ENCODE measurements at regions of chr6 and their contacts with region 1.

Region 1: DNA sequence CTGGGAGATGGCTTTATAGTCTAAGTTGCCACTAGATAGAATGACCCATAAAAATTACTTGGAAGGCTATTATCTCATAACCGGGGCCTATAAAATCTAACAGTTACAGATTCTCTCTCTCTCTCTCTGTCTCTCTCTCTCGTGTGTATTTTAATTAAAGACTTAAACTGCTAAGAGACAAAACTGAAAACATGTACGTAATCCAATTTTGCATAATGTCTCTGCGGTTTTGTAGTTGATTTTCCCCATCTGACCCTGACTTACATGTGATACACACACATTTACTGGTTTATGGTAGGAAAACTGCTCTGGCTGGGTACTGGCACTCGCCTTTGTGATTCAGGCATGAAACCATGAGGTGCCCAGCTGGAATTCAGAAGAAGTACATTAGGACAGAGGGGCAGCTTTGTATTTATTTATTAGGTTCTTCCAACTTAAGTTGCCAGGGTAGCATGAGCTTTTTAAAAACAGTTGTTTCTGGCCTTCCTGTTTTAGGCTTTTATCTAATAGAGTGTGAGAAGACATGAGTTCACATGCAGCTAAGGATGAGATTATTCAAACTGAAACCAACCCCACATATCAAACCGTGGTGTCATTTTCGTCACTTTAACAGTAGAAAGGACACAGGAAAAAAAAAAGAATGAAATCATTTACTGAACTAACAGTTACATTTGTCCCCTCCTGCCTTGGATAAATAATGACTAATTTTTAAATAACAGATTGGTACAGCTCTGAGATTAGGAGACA is 182.5 kb downstream of the GMPR start:
- DNase-seq: peak in 6 of 9 experiments; percentile 15 to 89 (median 43)
- ATAC-seq: peak; percentile 77
- H3K4me3 ChIP-seq: peak overlapping the region in 1 of 2 experiments; percentile 3
- H3K4me3 Mint-ChIP-seq: peak overlapping the region; percentile 78
- H3K27ac ChIP-seq: peak overlapping the region; percentile 62 to 95
- H3K27ac Mint-ChIP-seq: peak overlapping the region; percentile 98
- H3K4me1 ChIP-seq: peaks cover 27% of the 10 kb centered on the region
- H3K4me1 Mint-ChIP-seq: peaks cover 42% of the 10 kb centered on the region
- H3K27me3 ChIP-seq: no peaks in the 10 kb centered on the region
- H3K27me3 Mint-ChIP-seq: no peaks in the 10 kb centered on the region
- CTCF ChIP-seq: no peak

Region 2: GRCh38 chr6:16124198-16125180 is 296.4 kb before region 1 on chr6:
- CTCF ChIA-PET with region 1: no interaction called
- POLR2A ChIA-PET with region 1: no interaction called
- intact Hi-C with region 1: no loop called
- DNase-seq: no peak
- ATAC-seq: no peak
- H3K4me3 ChIP-seq: no peak overlapping the region
- H3K4me3 Mint-ChIP-seq: no peak overlapping the region
- H3K27ac ChIP-seq: no peak overlapping the region
- H3K27ac Mint-ChIP-seq: no peak overlapping the region
- H3K4me1 ChIP-seq: no peaks in the 10 kb centered on the region
- H3K4me1 Mint-ChIP-seq: peaks cover 7% of the 10 kb centered on the region
- H3K27me3 ChIP-seq: peaks cover 0 to 2% of the 10 kb centered on the region in 2 experiments
- H3K27me3 Mint-ChIP-seq: peaks cover 2% of the 10 kb centered on the region
- CTCF ChIP-seq: no peak

Region 3: DNA sequence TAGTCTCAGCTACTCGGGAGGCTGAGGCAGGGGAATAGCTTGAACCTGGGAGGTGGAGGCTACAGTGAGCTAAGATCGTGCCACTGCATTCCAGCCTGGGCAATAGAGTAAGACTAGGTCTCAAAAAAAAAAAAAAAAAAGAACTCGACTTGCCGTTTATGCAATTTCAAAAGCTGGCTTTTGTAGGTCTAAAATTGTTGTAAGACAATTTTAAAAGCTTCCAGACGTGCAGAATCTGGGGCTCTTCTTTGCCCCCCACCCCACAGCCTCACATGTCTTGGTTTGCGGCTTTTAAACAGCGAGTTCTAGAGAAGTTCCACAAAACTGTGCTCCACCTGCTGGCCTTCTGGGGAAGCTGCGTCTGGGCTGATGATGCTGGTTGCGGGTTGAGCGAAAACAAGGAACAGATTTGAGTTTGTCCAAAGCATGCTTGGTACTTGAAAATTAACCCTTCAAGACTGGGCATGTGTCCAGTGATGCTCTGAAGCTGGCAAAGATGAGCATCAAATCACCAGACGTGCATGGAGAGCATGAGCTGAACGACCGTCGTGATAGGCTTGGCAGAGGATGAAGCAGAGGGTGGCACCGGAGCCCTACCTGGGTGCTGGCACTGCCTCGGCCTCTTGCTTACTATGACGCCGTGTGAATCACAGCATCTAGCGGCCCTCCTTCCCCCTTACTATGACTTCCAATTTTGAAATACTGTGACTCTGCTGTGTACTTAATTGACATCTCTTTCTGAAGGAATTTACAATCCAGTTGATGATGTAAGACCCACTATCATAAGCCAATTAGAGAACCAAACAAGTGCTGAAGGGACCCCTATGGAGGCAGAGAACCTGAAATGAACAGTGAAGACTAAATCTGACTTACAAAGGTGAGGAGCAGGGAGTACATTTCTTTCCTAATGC is 11.1 kb before region 1 on chr6:
- CTCF ChIA-PET with region 1: interaction called, 9 read pairs
- POLR2A ChIA-PET with region 1: interaction called, 12 read pairs
- intact Hi-C with region 1: no loop called
- DNase-seq: peak; percentile 8 to 76 (median 60)
- ATAC-seq: peak; percentile 67
- H3K4me3 ChIP-seq: no peak overlapping the region
- H3K4me3 Mint-ChIP-seq: no peak overlapping the region
- H3K27ac ChIP-seq: no peak overlapping the region
- H3K27ac Mint-ChIP-seq: peak overlapping the region; percentile 7
- H3K4me1 ChIP-seq: no peaks in the 10 kb centered on the region
- H3K4me1 Mint-ChIP-seq: peaks cover 26% of the 10 kb centered on the region
- H3K27me3 ChIP-seq: no peaks in the 10 kb centered on the region
- H3K27me3 Mint-ChIP-seq: no peaks in the 10 kb centered on the region
- CTCF ChIP-seq: peak; percentile 66

Region 4: GRCh38 chr6:16481697-16482399 is 61.0 kb after region 1 on chr6:
- CTCF ChIA-PET with region 1: no interaction called
- POLR2A ChIA-PET with region 1: no interaction called
- intact Hi-C with region 1: loop called (anchors 5 kb)
- DNase-seq: peak; percentile 30 to 95 (median 61)
- ATAC-seq: peak; percentile 81
- H3K4me3 ChIP-seq: no peak overlapping the region
- H3K4me3 Mint-ChIP-seq: peak overlapping the region; percentile 52
- H3K27ac ChIP-seq: peak overlapping the region; percentile 28 to 83
- H3K27ac Mint-ChIP-seq: peak overlapping the region; percentile 95
- H3K4me1 ChIP-seq: peaks cover 61% of the 10 kb centered on the region
- H3K4me1 Mint-ChIP-seq: peaks cover 77% of the 10 kb centered on the region
- H3K27me3 ChIP-seq: no peaks in the 10 kb centered on the region
- H3K27me3 Mint-ChIP-seq: no peaks in the 10 kb centered on the region
- CTCF ChIP-seq: no peak

Measured in CD8-positive, alpha-beta T cell (primary cell).